Vagina (tissue), 2 donors: ENCODE measurements at regions of chr4 and their contacts with region 1.

Region 1: GRCh38 chr4:7244751-7245320 is 52.5 kb downstream of the SORCS2 start:
- DNase-seq: no peak
- H3K4me3 ChIP-seq: no peak overlapping the region
- H3K27ac ChIP-seq: no peak overlapping the region
- H3K4me1 ChIP-seq: peaks cover 12% of the 10 kb centered on the region
- H3K27me3 ChIP-seq: no peaks in the 10 kb centered on the region
- CTCF ChIP-seq: no peak
- POLR2A ChIP-seq: no peak

Region 2: GRCh38 chr4:7206911-7207567 is 37.8 kb before region 1 on chr4:
- intact Hi-C with region 1: loop called (anchors 5 kb)
- DNase-seq: no peak
- H3K4me3 ChIP-seq: no peak overlapping the region
- H3K27ac ChIP-seq: peak overlapping the region; percentile 86
- H3K4me1 ChIP-seq: peaks cover 53% of the 10 kb centered on the region
- H3K27me3 ChIP-seq: no peaks in the 10 kb centered on the region
- CTCF ChIP-seq: no peak
- POLR2A ChIP-seq: no peak